SK-N-SH (cell line): ENCODE measurements at regions of chr6 and their contacts with region 1.

Region 1: DNA sequence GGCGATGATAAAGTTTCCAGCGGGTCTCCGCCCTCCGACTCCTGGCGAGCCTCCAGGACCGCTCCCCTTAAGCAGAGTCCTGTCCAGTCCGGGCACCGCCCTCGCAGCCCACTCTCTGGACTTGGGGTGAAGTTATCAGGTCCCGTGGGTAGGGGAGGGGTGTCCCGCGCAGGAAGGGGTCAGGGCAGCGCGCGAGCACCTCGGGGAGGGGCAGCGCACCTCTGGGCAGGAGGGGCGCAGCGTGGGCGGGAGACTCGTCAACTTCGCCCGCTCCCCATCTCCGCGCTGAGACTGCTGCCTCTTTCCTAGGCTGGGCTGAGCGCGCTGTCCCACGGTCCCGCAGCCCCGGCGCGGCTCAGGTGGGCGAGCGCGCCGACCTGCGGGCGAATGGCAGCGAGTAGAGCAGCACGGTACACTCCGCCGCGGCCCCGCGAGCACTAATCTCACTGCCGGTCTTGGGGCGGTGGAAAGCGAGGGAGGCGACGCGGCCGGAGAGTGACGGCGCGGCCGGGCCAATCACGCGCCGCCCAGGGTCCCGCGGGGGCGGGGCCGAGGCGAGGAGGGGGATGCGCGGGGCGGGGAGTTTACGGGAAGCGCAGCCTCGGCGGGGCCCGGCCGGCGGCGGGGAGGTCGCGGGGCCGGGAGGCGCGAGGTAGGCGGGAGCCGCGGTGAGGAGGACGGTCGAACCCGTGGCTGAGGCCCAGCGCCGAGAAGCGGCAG is at the start of gene MAN1A1:
- DNase-seq: peak; percentile 99
- H3K4me3 ChIP-seq: peak within 1 kb of the TSS; percentile 87 to 94
- H3K27ac ChIP-seq: peak within 1 kb of the TSS; percentile 68 to 86
- H3K4me1 ChIP-seq: peaks cover 0 to 11% of the 10 kb centered on the region in 2 experiments; a peak in 3 of 4 replicates
- H3K27me3 ChIP-seq: no peaks in the 10 kb centered on the region
- CTCF ChIP-seq: no peak; the same call in 1 of the 2 replicates
- EP300 ChIP-seq: no peak
- RAD21 ChIP-seq: no peak; the same call in 1 of the 2 replicates
- polyA plus RNA-seq, gene MAN1A1: 28.0 and 32.4 TPM in 2 replicates

Region 2: GRCh38 chr6:119129148-119129967 is 220.1 kb before region 1 on chr6:
- CTCF ChIA-PET with region 1: interaction called, 10 read pairs
- POLR2A ChIA-PET with region 1: no interaction called
- DNase-seq: peak; percentile 50
- H3K4me3 ChIP-seq: peak overlapping the region in 1 of 2 experiments; percentile 24; a peak in 2 of 4 replicates
- H3K27ac ChIP-seq: peak overlapping the region; percentile 67 to 94
- H3K4me1 ChIP-seq: peaks cover 18 to 21% of the 10 kb centered on the region in 2 experiments
- H3K27me3 ChIP-seq: no peaks in the 10 kb centered on the region
- CTCF ChIP-seq: peak; percentile 91
- EP300 ChIP-seq: no peak
- RAD21 ChIP-seq: peak; percentile 77

Region 3: GRCh38 chr6:119138906-119139541 is 210.5 kb before region 1 on chr6:
- CTCF ChIA-PET with region 1: interaction called, 11 read pairs
- POLR2A ChIA-PET with region 1: no interaction called
- DNase-seq: no peak
- H3K4me3 ChIP-seq: no peak overlapping the region
- H3K27ac ChIP-seq: peak overlapping the region in 1 of 2 experiments; percentile 39; a peak in 1 of 4 replicates
- H3K4me1 ChIP-seq: peaks cover 0 to 12% of the 10 kb centered on the region in 2 experiments; a peak in 2 of 4 replicates
- H3K27me3 ChIP-seq: no peaks in the 10 kb centered on the region
- CTCF ChIP-seq: no peak
- EP300 ChIP-seq: no peak
- RAD21 ChIP-seq: no peak

Region 4: DNA sequence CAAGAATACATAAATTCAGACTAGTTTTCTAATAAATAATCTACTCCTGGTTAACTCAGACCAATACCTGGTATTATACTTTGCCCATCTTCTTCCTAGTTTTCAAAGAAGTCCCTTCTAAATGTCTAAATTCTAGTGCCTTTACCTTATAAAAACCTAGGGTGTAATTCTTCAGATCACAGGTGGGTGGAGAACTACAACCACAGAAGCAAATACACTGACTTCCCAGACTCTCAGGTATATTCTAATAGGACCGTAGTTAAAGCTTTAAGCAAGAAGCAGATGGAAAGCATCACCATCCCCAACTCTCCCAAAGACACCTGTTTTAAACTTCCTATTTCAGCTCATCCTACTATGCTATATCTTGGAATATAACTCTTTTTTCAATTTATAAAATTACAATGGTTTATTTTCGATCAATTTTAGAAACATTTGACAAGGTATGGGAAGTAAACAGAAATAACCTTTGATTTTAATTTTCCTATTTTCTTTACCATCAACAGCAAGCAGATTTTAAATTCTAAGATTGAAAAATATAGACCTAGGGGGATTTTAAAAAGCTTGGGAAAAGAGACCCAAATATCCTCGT is 15.7 kb before region 1 on chr6:
- CTCF ChIA-PET with region 1: interaction called, 18 read pairs
- POLR2A ChIA-PET with region 1: no interaction called
- DNase-seq: peak; percentile 22
- H3K4me3 ChIP-seq: no peak overlapping the region
- H3K27ac ChIP-seq: peak overlapping the region in 1 of 2 experiments; percentile 64; a peak in 1 of 4 replicates
- H3K4me1 ChIP-seq: peaks cover 0 to 23% of the 10 kb centered on the region in 2 experiments; a peak in 2 of 4 replicates
- H3K27me3 ChIP-seq: no peaks in the 10 kb centered on the region
- CTCF ChIP-seq: peak; percentile 45
- EP300 ChIP-seq: no peak
- RAD21 ChIP-seq: peak; percentile 68

Region 5: DNA sequence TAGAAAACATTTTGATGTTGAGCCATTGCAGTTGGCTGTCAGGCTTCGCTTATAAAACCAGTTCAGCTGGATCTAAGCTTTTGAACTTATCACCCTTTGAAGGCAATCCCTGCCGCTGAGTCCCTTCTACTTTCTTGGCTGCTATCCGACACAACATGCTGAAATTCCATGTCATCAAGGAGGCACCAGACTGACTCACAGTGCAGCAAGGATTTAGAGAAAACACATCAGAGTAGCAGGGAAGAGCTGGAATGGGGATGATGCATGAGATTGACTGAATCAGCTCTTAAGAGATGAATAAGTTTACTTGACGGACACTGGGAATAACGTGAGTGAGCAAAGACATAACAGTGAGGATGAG is 135.1 kb after region 1 on chr6:
- CTCF ChIA-PET with region 1: no interaction called
- POLR2A ChIA-PET with region 1: no interaction called
- DNase-seq: no peak
- H3K4me3 ChIP-seq: no peak overlapping the region
- H3K27ac ChIP-seq: no peak overlapping the region
- H3K4me1 ChIP-seq: no peaks in the 10 kb centered on the region; a peak in 1 of 4 replicates
- H3K27me3 ChIP-seq: no peaks in the 10 kb centered on the region
- CTCF ChIP-seq: no peak
- EP300 ChIP-seq: peak in 1 of 2 experiments; percentile 48; a peak in 1 of 4 replicates
- RAD21 ChIP-seq: no peak